Activated naive CD4-positive, alpha-beta T cell treated with anti-CD3 and anti-CD28 coated beads, Interleukin-2, amount 10 ng/mL, durations not matched to agents 7 days and 5 days (primary cell): ENCODE measurements at regions of chr6 and their contacts with region 1.

Region 1: DNA sequence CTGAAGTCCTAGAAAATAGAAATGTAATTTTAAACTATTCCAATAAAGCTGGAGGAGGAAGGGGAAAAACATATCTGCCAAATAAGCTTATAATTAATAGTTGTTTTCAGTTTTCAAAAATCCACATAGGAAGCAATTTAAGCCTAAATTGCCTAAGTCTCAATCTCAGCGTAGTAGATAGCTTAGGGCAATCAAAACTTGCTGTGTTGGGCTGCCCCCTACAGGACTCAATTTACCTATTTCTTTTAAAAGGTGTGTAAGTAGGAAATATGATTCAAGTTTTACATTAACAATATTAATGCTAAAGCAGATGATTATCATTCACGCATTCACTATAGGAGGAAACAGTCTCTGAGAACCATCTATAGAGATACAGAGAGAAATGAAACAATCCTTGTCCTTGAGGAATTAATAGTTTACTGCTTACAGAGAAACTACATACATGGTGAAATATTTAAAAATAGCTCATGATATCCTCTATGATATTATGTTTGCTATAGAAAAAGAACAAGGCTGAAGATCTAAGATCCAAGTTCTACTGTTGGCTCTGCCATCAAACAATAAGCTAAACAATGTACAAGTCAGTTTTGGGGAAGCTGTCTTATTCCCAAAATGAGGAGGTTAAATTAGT is 102.1 kb downstream of the ATG5 start:
- DNase-seq: peak; percentile 84
- H3K4me3 Mint-ChIP-seq: no peak overlapping the region
- H3K27ac Mint-ChIP-seq: no peak overlapping the region
- H3K4me1 Mint-ChIP-seq: peaks cover 17% of the 10 kb centered on the region
- H3K27me3 Mint-ChIP-seq: no peaks in the 10 kb centered on the region

Region 2: GRCh38 chr6:105431226-105431625 is 792.2 kb before region 1 on chr6:
- CTCF ChIA-PET with region 1: interaction called, 17 read pairs
- DNase-seq: no peak
- H3K4me3 Mint-ChIP-seq: no peak overlapping the region
- H3K27ac Mint-ChIP-seq: no peak overlapping the region
- H3K4me1 Mint-ChIP-seq: no peaks in the 10 kb centered on the region
- H3K27me3 Mint-ChIP-seq: peaks cover 9% of the 10 kb centered on the region

Region 3: GRCh38 chr6:105992315-105992961 is 231.0 kb before region 1 on chr6:
- CTCF ChIA-PET with region 1: interaction called, 10 read pairs
- DNase-seq: peak; percentile 93
- H3K4me3 Mint-ChIP-seq: peak overlapping the region; percentile 79
- H3K27ac Mint-ChIP-seq: peak overlapping the region; percentile 85
- H3K4me1 Mint-ChIP-seq: peaks cover 55% of the 10 kb centered on the region
- H3K27me3 Mint-ChIP-seq: peaks cover 71% of the 10 kb centered on the region

Region 4: GRCh38 chr6:106098383-106099234 is 124.8 kb before region 1 on chr6:
- CTCF ChIA-PET with region 1: interaction called, 11 read pairs
- DNase-seq: peak; percentile 85
- H3K4me3 Mint-ChIP-seq: peak overlapping the region; percentile 85
- H3K27ac Mint-ChIP-seq: peak overlapping the region; percentile 98
- H3K4me1 Mint-ChIP-seq: peaks cover 98% of the 10 kb centered on the region
- H3K27me3 Mint-ChIP-seq: peaks cover 11% of the 10 kb centered on the region

Region 5: DNA sequence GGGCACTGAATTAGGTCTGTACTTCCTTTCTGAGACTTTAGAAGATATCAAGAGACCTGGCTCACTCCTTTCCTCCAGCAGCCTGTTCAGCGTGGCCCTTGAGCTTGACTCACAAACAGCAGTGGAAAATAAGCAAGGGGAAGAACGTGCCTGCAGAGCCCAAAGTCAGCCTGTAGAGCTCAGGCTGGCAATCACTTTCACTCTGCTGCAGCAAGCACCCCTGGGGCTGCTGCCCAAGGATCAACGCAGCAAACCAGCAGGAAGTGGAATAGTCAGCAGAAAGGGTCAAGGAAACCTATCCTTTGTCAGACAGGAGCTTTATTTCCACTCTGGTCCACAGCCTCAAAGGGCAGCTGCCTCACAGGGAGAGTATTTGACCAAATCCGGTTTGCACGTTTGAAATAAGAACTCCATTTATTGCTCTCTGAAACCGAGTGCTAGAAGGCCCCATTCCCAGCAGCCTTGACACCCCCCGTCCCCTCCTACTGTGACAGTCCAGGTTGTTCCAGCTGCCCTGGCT is 59.9 kb before region 1 on chr6:
- CTCF ChIA-PET with region 1: interaction called, 11 read pairs
- DNase-seq: peak; percentile 66
- H3K4me3 Mint-ChIP-seq: no peak overlapping the region
- H3K27ac Mint-ChIP-seq: peak overlapping the region; percentile 79
- H3K4me1 Mint-ChIP-seq: peaks cover 41% of the 10 kb centered on the region
- H3K27me3 Mint-ChIP-seq: no peaks in the 10 kb centered on the region

Region 6: GRCh38 chr6:106199998-106200397 is 23.4 kb before region 1 on chr6:
- CTCF ChIA-PET with region 1: no interaction called
- DNase-seq: no peak
- H3K4me3 Mint-ChIP-seq: no peak overlapping the region
- H3K27ac Mint-ChIP-seq: no peak overlapping the region
- H3K4me1 Mint-ChIP-seq: peaks cover 35% of the 10 kb centered on the region
- H3K27me3 Mint-ChIP-seq: no peaks in the 10 kb centered on the region